ENCODE measurements at regions of chr10 and their contacts with region 1.

Region 1: GRCh38 chr10:87547734-87548311 is 43.1 kb downstream of the MINPP1 start:
- DNase-seq: no peak
- H3K4me3 ChIP-seq: no peak overlapping the region
- H3K27ac ChIP-seq: no peak overlapping the region
- H3K4me1 ChIP-seq: peaks cover 0 to 2% (median 0%) of the 10 kb centered on the region in 4 donors
- H3K27me3 ChIP-seq: no peaks in the 10 kb centered on the region
- CTCF ChIP-seq: no peak
- EP300 ChIP-seq: no peak
- POLR2A ChIP-seq: no peak

Region 2: GRCh38 chr10:87734987-87735827 is 187.4 kb after region 1 on chr10:
- in situ Hi-C with region 1: loop called (anchors 25 kb)
- intact Hi-C with region 1: no loop called
- DNase-seq: no peak
- H3K4me3 ChIP-seq: no peak overlapping the region
- H3K27ac ChIP-seq: no peak overlapping the region
- H3K4me1 ChIP-seq: peaks cover 0 to 5% (median 0%) of the 10 kb centered on the region in 4 donors
- H3K27me3 ChIP-seq: no peaks in the 10 kb centered on the region
- CTCF ChIP-seq: peak; percentile 66 to 72 (median 70)
- EP300 ChIP-seq: no peak
- POLR2A ChIP-seq: no peak